Common myeloid progenitor, CD34-positive (primary cell): ENCODE measurements at regions of chr16 and their contacts with region 1.

Region 1: DNA sequence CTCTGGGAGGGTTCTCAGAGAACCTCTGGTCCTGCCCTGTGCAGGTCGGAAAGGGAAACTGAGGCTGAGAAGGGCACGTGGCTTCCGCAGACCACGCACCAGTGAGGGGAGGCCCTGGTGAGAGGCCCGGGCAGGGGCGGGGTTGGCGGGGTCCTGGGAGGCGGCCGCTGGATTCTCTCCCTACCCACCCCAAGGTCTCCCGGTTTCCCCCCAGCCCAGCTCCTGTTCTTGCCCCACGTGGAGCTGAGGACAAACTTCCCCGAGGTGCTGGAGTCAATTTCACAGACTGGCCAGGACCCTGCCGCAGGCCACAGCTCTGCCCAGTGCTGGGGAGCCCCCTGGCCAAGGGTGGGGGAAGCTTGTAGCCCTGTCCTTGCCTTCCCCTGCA is 11.5 kb downstream of the CCL17 start:
- DNase-seq: no peak
- H3K4me3 ChIP-seq: peak overlapping the region in 2 of 7 experiments; percentile 60 to 79
- H3K27ac ChIP-seq: no peak overlapping the region
- H3K4me1 ChIP-seq: peaks cover 0 to 25% (median 21%) of the 10 kb centered on the region in 4 experiments
- H3K27me3 ChIP-seq: peaks cover 0 to 1% (median 0%) of the 10 kb centered on the region in 5 experiments

Region 2: DNA sequence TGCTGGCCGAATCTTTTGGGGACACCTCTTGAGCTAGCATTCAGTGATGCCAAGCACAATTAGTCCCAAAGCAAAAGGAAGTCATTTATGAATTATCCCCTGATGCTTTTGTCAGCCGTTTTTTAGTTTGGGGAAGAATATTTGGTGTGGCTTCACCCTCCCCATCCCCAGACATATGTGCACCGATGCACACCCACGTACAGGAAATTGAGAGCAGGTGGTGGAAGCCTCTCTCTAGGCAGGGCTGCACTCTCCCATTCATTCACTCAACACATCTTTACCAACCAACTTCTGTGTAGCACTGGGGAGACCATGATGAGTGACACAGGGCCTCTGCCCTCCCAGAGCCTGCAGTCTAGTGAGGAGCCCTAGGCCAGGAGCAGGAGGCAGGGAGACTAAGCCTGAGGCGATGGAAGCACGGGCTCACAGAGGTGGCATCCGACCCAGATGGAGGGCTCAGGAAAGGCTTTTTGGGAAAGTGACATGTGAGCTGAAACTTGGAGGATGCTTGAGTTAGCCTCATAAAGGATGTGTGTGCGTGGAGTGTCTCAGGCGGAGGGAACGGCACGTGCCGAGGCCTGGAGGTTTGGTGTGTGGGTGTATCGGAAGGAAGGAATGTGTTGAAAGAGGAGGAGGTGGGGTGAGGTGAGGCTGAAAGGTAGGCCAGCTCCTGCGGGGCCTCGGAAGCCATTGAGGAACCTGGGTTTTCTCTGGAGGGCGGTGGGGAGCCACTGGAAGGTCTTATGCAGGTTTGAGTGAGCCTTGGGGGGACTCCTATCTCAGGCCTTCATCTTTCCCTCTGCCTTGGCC is 274.1 kb before region 1 on chr16:
- CTCF ChIA-PET with region 1: no interaction called
- POLR2A ChIA-PET with region 1: no interaction called
- DNase-seq: peak; percentile 32 to 92 (median 89)
- H3K4me3 ChIP-seq: peak overlapping the region in 3 of 7 experiments; percentile 3 to 30 (median 19)
- H3K27ac ChIP-seq: peak overlapping the region; percentile 6 to 67
- H3K4me1 ChIP-seq: peaks cover 5 to 75% (median 70%) of the 10 kb centered on the region in 4 experiments
- H3K27me3 ChIP-seq: no peaks in the 10 kb centered on the region

Region 3: GRCh38 chr16:57394444-57394843 is 21.7 kb before region 1 on chr16:
- CTCF ChIA-PET with region 1: interaction called, 12 read pairs
- POLR2A ChIA-PET with region 1: no interaction called
- DNase-seq: no peak
- H3K4me3 ChIP-seq: no peak overlapping the region
- H3K27ac ChIP-seq: no peak overlapping the region
- H3K4me1 ChIP-seq: no peaks in the 10 kb centered on the region
- H3K27me3 ChIP-seq: no peaks in the 10 kb centered on the region

Region 4: DNA sequence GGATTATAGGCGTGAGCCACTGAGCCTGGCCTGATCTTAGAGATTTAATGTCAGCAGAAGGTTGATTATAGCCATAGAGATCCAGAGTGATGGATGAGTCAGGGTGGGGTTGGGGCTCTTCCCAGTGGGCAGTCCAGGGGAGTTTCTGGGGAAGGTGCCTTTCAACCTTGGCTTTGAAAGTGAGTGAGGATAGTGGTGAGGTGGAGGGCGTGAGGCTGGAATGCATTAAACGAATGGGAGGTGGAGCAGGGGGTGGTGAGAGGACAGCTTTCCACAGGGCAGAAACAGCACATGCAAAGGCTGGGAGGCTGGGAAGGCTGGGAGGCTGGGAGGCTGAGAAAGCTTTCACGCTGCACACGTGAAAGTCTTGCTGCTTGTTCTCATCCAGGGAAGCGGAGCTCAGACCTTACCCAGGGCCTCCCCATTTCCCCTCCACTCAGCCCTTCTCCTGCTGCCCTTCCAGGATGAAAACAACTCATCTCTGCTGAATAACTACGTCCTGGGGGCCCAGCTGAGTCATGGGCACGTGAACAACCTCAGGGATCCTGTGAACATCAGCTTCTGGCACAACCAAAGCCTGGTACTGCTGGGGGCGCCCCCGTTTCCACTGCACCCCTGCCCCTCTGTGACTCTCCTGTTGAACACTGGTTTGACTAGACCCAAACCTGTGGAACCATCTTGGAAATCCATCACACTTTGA is 148.6 kb after region 1 on chr16:
- CTCF ChIA-PET with region 1: no interaction called
- POLR2A ChIA-PET with region 1: no interaction called
- DNase-seq: no peak
- H3K4me3 ChIP-seq: no peak overlapping the region
- H3K27ac ChIP-seq: no peak overlapping the region
- H3K4me1 ChIP-seq: no peaks in the 10 kb centered on the region
- H3K27me3 ChIP-seq: no peaks in the 10 kb centered on the region